Activated naive CD8-positive, alpha-beta T cell treated with anti-CD3 and anti-CD28 coated beads, Interleukin-2, amount 10 ng/mL, durations not matched to agents 7 days and 5 days (primary cell): ENCODE measurements at regions of chr7 and their contacts with region 1.

Region 1: DNA sequence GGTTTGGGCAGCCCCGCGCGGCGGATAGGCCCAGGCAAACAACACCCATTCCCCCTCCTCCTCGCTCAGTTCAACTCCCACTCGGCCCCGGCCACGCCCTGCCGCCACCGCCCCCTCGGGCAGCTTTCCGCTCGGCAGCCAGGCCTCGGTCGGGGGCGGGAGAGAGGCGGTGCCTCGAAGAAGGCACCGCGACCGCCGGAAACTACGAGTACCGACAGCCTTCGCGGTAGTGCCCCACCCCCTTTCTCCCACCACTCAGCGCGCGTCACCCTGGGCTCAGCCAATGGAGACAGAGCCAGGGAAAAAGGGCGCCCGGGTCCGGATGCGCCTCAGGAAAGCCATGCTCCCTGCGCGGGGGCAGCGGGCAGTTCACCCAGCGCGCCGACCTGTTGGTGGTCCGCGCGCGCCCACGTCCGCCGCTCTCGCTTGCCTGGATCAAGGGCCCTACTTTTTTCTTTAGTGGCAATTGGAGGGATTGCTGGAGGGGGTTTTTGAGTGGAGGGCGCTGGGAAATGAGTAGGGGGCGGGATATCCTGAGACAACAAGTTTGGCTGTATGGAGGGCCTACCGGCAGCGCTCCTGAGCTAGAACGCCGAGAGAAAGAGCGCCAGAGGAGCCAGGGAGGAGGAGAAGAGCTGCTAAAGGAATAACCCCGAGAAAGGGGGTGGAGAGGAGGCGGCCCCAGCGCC is 557 bp upstream of the SP4 start:
- DNase-seq: peak; percentile 99
- ATAC-seq: peak; percentile 78
- H3K4me3 Mint-ChIP-seq: peak overlapping the region; percentile 100
- H3K27ac Mint-ChIP-seq: peak overlapping the region; percentile 99
- H3K4me1 Mint-ChIP-seq: peaks cover 34% of the 10 kb centered on the region
- H3K27me3 Mint-ChIP-seq: no peaks in the 10 kb centered on the region

Region 2: DNA sequence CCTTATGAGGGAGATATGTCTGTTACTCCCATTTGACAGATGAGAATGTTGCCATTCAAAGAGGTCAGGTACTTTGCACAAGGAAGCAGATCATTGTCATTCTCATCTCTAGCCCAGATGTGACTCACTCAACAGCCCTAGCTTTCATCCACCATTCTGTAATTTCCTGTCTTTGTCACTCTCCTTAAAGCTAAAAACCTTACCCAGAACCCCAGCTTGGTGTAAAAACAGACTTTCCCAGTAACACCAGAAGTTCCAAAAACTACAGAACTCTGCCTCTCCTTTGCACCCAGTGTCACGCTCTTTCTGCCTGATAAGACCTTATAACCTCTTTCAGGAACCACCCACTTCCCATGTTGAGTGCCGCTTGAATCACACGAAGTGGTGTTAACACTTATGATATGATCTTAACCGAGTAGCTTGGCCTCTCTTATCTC is 88.6 kb before region 1 on chr7:
- POLR2A ChIA-PET with region 1: interaction called, 30 read pairs
- DNase-seq: no peak
- ATAC-seq: peak; percentile 97
- H3K4me3 Mint-ChIP-seq: peak overlapping the region; percentile 6
- H3K27ac Mint-ChIP-seq: peak overlapping the region; percentile 90
- H3K4me1 Mint-ChIP-seq: peaks cover 44% of the 10 kb centered on the region
- H3K27me3 Mint-ChIP-seq: no peaks in the 10 kb centered on the region

Region 3: GRCh38 chr7:21352540-21353387 is 74.6 kb before region 1 on chr7:
- POLR2A ChIA-PET with region 1: interaction called, 44 read pairs
- DNase-seq: no peak
- ATAC-seq: peak; percentile 86
- H3K4me3 Mint-ChIP-seq: peak overlapping the region; percentile 76
- H3K27ac Mint-ChIP-seq: peak overlapping the region; percentile 96
- H3K4me1 Mint-ChIP-seq: peaks cover 53% of the 10 kb centered on the region
- H3K27me3 Mint-ChIP-seq: no peaks in the 10 kb centered on the region

Region 4: GRCh38 chr7:21383227-21384220 is 43.8 kb before region 1 on chr7:
- POLR2A ChIA-PET with region 1: interaction called, 10 read pairs
- DNase-seq: no peak
- ATAC-seq: peak; percentile 63
- H3K4me3 Mint-ChIP-seq: peak overlapping the region; percentile 38
- H3K27ac Mint-ChIP-seq: peak overlapping the region; percentile 80
- H3K4me1 Mint-ChIP-seq: peaks cover 13% of the 10 kb centered on the region
- H3K27me3 Mint-ChIP-seq: no peaks in the 10 kb centered on the region

Region 5: GRCh38 chr7:21414795-21415393 is 12.4 kb before region 1 on chr7:
- POLR2A ChIA-PET with region 1: interaction called, 15 read pairs
- DNase-seq: no peak
- ATAC-seq: no peak
- H3K4me3 Mint-ChIP-seq: no peak overlapping the region
- H3K27ac Mint-ChIP-seq: no peak overlapping the region
- H3K4me1 Mint-ChIP-seq: peaks cover 18% of the 10 kb centered on the region
- H3K27me3 Mint-ChIP-seq: no peaks in the 10 kb centered on the region

Region 6: GRCh38 chr7:21454182-21454581 is 26.9 kb after region 1 on chr7:
- POLR2A ChIA-PET with region 1: no interaction called
- DNase-seq: no peak
- ATAC-seq: no peak
- H3K4me3 Mint-ChIP-seq: no peak overlapping the region
- H3K27ac Mint-ChIP-seq: no peak overlapping the region
- H3K4me1 Mint-ChIP-seq: peaks cover 12% of the 10 kb centered on the region
- H3K27me3 Mint-ChIP-seq: no peaks in the 10 kb centered on the region